ENCODE measurements at regions of chr13 and their contacts with region 1.

Region 1: DNA sequence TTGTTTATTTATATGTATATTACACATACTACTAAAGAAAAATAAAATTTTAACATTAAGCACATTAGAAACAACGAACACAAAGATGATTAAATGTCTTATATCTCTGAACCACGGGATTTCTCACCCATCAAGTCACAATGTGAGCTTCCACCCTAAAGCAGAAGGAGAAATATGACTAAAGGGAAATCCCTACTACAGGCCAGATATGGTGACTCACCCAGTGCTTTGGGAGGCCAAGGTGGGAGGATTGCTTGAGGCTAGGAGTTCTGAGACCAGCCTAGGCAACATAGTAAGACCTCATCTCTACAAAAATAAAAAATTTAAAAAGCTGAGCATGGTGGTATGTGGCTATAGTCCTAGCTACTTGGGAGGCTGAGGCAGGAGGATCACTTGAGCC is 24.6 kb downstream of the DCT start:
- DNase-seq: no peak
- ATAC-seq: no peak

Region 2: DNA sequence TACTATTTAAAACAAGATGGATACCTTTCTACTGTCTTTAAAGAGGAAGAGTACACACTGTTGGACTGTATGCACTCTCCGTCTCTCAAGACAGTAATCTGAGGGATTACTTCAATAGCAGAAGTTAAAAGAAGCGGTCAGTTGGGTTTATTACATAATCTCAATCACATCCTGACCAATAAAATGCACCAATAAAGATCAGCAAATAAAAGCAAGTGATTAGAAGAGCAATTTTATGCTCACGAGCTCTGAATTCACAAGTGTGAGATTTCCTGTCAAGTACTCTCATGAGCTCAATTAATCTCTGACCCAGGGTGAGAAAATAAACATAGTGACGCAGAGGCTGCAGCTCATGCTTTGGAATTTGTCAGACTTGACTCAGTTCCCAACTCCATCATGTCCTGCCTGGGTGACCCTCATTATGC is 834.1 kb after region 1 on chr13:
- intact Hi-C with region 1: loop called in 1 of 2 experiments (anchors 10 kb)
- DNase-seq: no peak
- ATAC-seq: no peak